H1 (cell line): ENCODE measurements at regions of chr9 and their contacts with region 1.

Region 1: GRCh38 chr9:19379697-19380046 is 364 bp downstream of the RPS6 start:
- DNase-seq: no peak
- H3K4me3 ChIP-seq: peak overlapping the region; percentile 75 to 99 (median 84)
- H3K27ac ChIP-seq: peak overlapping the region; percentile 92
- H3K4me1 ChIP-seq: peaks cover 0 to 7% (median 2%) of the 10 kb centered on the region in 4 experiments; a peak in 2 of 7 replicates
- H3K27me3 ChIP-seq: no peaks in the 10 kb centered on the region
- CTCF ChIP-seq: no peak
- EP300 ChIP-seq: no peak
- POLR2A ChIP-seq: no peak
- RAD21 ChIP-seq: no peak

Region 2: DNA sequence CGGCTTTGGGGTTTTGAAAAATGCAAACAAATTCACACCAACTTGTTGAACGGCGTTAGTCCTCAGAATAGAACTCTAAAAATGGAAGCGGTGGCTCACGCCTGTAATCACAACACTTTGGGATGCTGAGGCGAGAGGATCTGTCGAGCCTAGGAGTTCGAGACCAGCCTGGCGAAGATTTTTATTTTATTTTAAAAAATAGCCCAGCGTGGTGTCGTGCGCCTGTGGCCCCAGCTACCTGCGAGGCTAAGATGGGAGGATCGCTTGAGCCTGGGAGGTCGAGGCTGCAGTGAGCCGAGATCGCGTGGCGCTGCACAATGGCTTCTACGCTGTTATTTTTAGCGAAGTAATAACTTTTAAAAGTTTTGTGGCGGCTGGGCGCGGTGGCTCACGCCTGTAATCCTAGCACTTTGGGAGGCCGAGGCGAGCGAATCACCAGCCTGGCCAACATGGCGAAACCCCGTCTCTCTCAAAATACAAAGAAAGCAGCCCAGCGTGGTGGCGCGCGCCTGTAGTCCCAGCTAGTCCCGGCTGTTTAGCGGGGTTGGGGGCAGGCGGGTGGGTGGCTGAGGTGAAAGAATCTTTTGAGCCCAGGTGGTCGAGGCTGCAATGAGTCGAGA is 251.7 kb before region 1 on chr9:
- CTCF ChIA-PET with region 1: no interaction called
- POLR2A ChIA-PET with region 1: interaction called, 15 read pairs
- DNase-seq: peak in 1 of 2 experiments; percentile 65
- H3K4me3 ChIP-seq: peak overlapping the region; percentile 83 to 98 (median 86)
- H3K27ac ChIP-seq: peak overlapping the region; percentile 75
- H3K4me1 ChIP-seq: peaks cover 8 to 16% (median 9%) of the 10 kb centered on the region in 4 experiments
- H3K27me3 ChIP-seq: no peaks in the 10 kb centered on the region
- CTCF ChIP-seq: no peak
- EP300 ChIP-seq: no peak
- POLR2A ChIP-seq: peak in 1 of 2 experiments; percentile 70; a peak in 2 of 3 replicates
- RAD21 ChIP-seq: no peak

Region 3: GRCh38 chr9:19140259-19140658 is 239.4 kb before region 1 on chr9:
- CTCF ChIA-PET with region 1: no interaction called
- POLR2A ChIA-PET with region 1: no interaction called
- DNase-seq: no peak
- H3K4me3 ChIP-seq: no peak overlapping the region
- H3K27ac ChIP-seq: no peak overlapping the region
- H3K4me1 ChIP-seq: no peaks in the 10 kb centered on the region; a peak in 1 of 7 replicates
- H3K27me3 ChIP-seq: no peaks in the 10 kb centered on the region
- CTCF ChIP-seq: no peak
- EP300 ChIP-seq: no peak
- POLR2A ChIP-seq: no peak
- RAD21 ChIP-seq: no peak

Region 4: GRCh38 chr9:19397845-19398244 is 18.2 kb after region 1 on chr9:
- CTCF ChIA-PET with region 1: no interaction called
- POLR2A ChIA-PET with region 1: interaction called, 53 read pairs
- DNase-seq: no peak
- H3K4me3 ChIP-seq: no peak overlapping the region
- H3K27ac ChIP-seq: no peak overlapping the region
- H3K4me1 ChIP-seq: no peaks in the 10 kb centered on the region
- H3K27me3 ChIP-seq: no peaks in the 10 kb centered on the region
- CTCF ChIP-seq: no peak
- EP300 ChIP-seq: no peak
- POLR2A ChIP-seq: no peak
- RAD21 ChIP-seq: no peak

Region 5: DNA sequence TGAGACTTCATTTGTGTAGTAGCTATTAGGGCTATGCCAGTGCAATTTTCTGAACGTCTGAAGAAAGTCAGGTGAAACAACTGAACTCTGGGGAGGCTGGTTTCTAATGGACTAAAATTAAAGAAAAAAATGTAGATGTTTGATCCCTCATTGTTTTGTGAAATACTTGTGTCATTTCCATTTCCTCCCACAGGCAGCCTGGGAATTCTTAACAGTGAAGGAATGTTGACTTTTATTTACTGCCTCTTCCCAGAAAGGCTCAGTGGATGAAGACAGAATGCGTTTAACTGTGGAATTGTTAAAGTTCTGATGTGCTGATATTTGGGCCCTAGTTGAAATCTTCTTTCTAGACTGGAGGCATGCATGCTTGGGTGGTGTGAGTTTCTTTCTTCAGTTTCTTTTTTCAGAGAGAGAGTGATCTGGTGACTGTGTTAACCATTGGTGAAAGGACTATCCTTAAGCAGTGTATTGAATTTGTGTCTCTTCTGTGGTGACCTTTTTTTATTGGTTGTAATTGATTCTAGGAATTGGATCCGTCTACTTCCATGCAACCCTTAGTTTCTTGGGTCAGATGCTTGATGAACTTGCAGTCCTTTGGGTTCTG is 44.6 kb after region 1 on chr9:
- CTCF ChIA-PET with region 1: interaction called, 3 read pairs
- POLR2A ChIA-PET with region 1: interaction called, 12 read pairs
- DNase-seq: no peak
- H3K4me3 ChIP-seq: no peak overlapping the region
- H3K27ac ChIP-seq: 0 out of 2 replicates have a peak overlapping the region, but pooled peaks have one; percentile 13
- H3K4me1 ChIP-seq: peaks cover 0 to 5% (median 2%) of the 10 kb centered on the region in 4 experiments; a peak in 4 of 7 replicates
- H3K27me3 ChIP-seq: no peaks in the 10 kb centered on the region
- CTCF ChIP-seq: no peak
- EP300 ChIP-seq: no peak
- POLR2A ChIP-seq: no peak
- RAD21 ChIP-seq: no peak

Region 6: DNA sequence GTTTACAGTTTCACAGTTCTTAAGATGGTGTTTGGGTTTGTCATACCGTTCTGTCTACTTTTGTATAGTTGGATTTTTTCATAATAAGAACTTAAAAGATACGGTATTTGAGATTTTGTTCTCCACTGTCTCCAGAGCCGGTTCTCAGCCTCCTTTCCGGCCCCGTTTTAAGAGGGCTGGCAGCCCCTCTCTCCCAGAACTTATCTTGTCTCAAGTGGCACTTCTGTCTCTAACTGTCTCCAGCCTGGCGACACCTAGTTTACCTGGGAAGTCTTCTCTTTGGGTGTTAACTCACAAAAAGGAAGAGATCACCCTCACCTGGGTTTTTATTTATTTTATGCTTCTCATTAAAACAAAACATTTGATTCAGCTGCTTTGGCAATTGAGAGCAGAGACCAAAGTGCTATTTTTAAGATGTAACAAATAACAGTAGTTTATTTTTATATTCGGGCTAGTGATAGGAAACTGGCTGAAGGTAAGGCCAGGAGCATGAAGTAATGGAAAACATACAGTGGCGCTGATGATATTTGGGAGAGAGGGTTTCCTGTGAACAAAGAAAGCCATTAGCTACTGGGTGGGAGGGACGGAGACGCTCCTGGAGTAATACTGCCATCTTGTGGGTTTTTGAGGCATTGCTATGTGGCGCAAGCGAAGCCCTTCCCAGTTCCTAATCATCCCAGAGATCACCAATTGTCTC is 77.5 kb after region 1 on chr9:
- CTCF ChIA-PET with region 1: interaction called, 7 read pairs
- POLR2A ChIA-PET with region 1: interaction called, 83 read pairs
- DNase-seq: peak; percentile 65 to 87
- H3K4me3 ChIP-seq: no peak overlapping the region; a peak in 1 of 8 replicates
- H3K27ac ChIP-seq: no peak overlapping the region
- H3K4me1 ChIP-seq: peaks cover 0 to 7% (median 5%) of the 10 kb centered on the region in 4 experiments; a peak in 2 of 7 replicates
- H3K27me3 ChIP-seq: no peaks in the 10 kb centered on the region
- CTCF ChIP-seq: peak; percentile 74 to 98 (median 85)
- EP300 ChIP-seq: no peak; a peak in 1 of 3 replicates
- POLR2A ChIP-seq: no peak
- RAD21 ChIP-seq: peak; percentile 99 to 100

Region 7: DNA sequence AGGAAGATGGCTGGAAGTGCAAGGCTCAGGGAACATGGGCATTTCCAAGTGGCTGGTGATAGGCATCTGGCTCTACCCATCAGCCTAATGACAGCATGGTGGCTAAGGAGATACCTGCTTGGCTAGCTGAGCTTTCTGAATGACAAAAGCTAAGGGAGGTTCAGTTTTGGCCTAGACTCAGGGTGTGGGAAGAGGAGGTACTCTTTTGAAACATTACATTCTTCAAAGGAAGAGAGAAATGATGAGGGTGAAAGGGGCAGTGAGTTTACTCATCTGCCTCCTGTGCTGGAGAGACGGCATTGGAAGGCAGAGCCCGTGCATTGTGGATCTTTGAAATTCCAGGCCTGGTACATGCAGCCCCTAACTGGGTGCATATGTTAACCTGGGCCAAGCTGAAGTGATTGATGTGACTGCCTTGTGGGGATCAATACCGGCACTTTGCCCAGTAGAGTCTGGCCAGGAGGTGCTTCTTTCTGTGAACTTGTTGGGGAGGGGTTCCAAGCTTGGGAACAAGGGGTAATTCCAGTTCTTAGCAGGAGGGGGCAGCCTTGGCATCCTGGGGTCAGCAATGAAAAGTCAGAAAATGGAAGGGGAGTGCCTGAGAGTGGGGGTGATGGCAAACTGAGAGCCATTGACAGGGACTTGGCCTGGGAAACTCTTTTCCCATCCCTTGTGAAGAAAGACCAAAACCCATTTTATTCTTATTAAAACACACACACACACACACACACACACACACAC is 137.7 kb after region 1 on chr9:
- CTCF ChIA-PET with region 1: no interaction called
- POLR2A ChIA-PET with region 1: no interaction called
- DNase-seq: peak; percentile 25 to 90
- H3K4me3 ChIP-seq: no peak overlapping the region
- H3K27ac ChIP-seq: no peak overlapping the region
- H3K4me1 ChIP-seq: no peaks in the 10 kb centered on the region; a peak in 1 of 7 replicates
- H3K27me3 ChIP-seq: peaks cover 0 to 1% (median 0%) of the 10 kb centered on the region in 4 experiments; a peak in 1 of 7 replicates
- CTCF ChIP-seq: peak; percentile 70 to 83 (median 80)
- EP300 ChIP-seq: no peak
- POLR2A ChIP-seq: no peak
- RAD21 ChIP-seq: peak; percentile 84 to 89

Region 8: DNA sequence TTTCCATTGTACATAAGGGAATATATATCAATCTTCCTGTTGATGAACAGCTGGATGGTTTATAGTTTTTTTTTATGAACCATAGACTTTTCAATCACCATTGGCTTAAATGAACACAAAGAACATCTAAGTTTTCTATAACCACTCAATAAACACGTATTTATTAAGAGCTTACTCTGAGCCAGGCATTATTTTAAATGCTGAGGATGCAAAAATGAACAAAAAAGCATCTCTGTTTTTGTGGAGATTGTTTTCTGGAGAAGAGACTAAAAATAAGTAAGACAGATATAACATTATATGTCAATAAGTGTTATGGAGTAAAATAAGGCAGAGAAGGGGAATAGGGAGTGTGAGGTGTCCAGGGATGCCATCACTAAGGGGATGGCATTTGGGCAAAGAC is 461.3 kb after region 1 on chr9:
- CTCF ChIA-PET with region 1: no interaction called
- POLR2A ChIA-PET with region 1: no interaction called
- DNase-seq: no peak
- H3K4me3 ChIP-seq: no peak overlapping the region
- H3K27ac ChIP-seq: no peak overlapping the region
- H3K4me1 ChIP-seq: no peaks in the 10 kb centered on the region
- H3K27me3 ChIP-seq: no peaks in the 10 kb centered on the region
- CTCF ChIP-seq: no peak
- EP300 ChIP-seq: no peak
- POLR2A ChIP-seq: no peak
- RAD21 ChIP-seq: no peak